ENCODE measurements at regions of chr17 and their contacts with region 1.

Region 1: DNA sequence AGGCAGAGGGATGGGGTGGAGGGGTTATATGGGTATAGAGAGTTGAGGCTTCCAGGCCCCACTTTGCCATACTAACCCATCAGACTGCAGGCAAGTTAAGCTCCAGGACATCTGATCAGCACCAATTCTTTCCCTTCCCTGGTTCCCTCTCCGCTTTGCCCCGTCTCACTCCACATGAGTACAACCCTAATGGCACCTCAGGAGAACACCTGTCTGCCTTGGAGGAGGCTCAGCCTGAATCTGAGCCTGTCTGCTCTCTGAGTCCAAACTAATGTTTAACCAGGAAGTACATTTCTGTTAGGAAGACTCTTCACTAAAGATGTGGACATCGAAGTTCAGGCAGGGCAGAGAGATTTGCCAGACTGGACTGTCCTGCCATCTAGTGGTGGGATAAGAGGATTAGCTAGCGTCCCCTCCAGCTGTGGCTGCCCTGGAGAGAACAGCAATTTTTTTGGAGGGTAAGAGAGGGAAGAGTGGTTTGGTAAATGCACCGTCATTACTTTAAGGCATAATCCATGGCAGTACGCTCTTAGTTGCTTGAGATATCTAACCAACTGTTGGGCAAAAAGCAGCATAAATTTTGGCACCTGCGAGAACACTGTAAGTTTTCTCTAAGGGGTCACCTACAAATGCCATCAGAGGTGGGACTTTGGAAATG is 29.2 kb upstream of the LRRC75A start:
- DNase-seq: peak; percentile 81 to 89 (median 84)
- ATAC-seq: peak; percentile 98
- H3K4me3 ChIP-seq: no peak overlapping the region
- H3K27ac ChIP-seq: no peak overlapping the region
- H3K4me1 ChIP-seq: peaks cover 6% of the 10 kb centered on the region
- H3K27me3 ChIP-seq: no peaks in the 10 kb centered on the region
- CTCF ChIP-seq: peak; percentile 88 to 97 (median 96)
- POLR2A ChIP-seq: no peak

Region 2: DNA sequence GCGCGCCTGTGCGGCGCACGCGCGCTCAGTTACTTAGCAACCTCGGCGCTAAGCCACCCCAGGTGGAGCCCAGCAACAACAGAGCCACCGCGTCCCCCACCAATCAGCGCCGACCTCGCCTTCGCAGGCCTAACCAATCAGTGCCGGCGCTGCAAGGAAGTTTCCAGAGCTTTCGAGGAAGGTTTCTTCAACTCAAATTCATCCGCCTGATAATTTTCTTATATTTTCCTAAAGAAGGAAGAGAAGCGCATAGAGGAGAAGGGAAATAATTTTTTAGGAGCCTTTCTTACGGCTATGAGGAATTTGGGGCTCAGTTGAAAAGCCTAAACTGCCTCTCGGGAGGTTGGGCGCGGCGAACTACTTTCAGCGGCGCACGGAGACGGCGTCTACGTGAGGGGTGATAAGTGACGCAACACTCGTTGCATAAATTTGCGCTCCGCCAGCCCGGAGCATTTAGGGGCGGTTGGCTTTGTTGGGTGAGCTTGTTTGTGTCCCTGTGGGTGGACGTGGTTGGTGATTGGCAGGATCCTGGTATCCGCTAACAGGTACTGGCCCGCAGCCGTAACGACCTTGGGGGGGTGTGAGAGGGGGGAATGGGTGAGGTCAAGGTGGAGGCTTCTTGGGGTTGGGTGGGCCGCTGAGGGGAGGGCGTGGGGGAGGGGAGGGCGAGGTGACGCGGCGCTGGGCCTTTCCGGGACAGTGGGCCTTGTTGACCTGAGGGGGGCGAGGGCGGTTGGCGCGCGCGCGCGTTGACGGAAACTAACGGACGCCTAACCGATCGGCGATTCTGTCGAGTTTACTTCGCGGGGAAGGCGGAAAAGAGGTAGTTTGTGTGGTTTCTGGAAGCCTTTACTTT is 140.3 kb before region 1 on chr17 and contains the start of gene UBB:
- intact Hi-C with region 1: loop called (anchors 10 kb)
- DNase-seq: peak; percentile 97 to 99 (median 98)
- ATAC-seq: peak; percentile 95
- H3K4me3 ChIP-seq: peak within 1 kb of the TSS; percentile 37 to 39
- H3K27ac ChIP-seq: peak within 1 kb of the TSS; percentile 95 to 99 (median 96)
- H3K4me1 ChIP-seq: peaks cover 56% of the 10 kb centered on the region
- H3K27me3 ChIP-seq: no peaks in the 10 kb centered on the region
- CTCF ChIP-seq: no peak
- POLR2A ChIP-seq: peak; percentile 97 to 100 (median 100)
- total RNA-seq, gene UBB: 450 to 486 TPM

Region 3: GRCh38 chr17:16453493-16453851 is 67.7 kb before region 1 on chr17:
- intact Hi-C with region 1: loop called (anchors 5 kb)
- DNase-seq: no peak
- ATAC-seq: no peak
- H3K4me3 ChIP-seq: no peak overlapping the region
- H3K27ac ChIP-seq: no peak overlapping the region
- H3K4me1 ChIP-seq: peaks cover 4% of the 10 kb centered on the region
- H3K27me3 ChIP-seq: no peaks in the 10 kb centered on the region
- CTCF ChIP-seq: no peak
- POLR2A ChIP-seq: no peak

Region 4: GRCh38 chr17:16463358-16464302 is 57.6 kb before region 1 on chr17:
- intact Hi-C with region 1: no loop called
- DNase-seq: peak; percentile 71 to 85 (median 80)
- ATAC-seq: peak; percentile 74
- H3K4me3 ChIP-seq: no peak overlapping the region
- H3K27ac ChIP-seq: peak overlapping the region in 2 of 4 donors; percentile 5 to 44
- H3K4me1 ChIP-seq: peaks cover 30% of the 10 kb centered on the region
- H3K27me3 ChIP-seq: no peaks in the 10 kb centered on the region
- CTCF ChIP-seq: peak in 5 of 7 experiments; percentile 31 to 61 (median 59)
- POLR2A ChIP-seq: no peak